Naive thymus-derived CD4-positive, alpha-beta T cell (primary cell): ENCODE measurements at regions of chr1 and their contacts with region 1.

Region 1: DNA sequence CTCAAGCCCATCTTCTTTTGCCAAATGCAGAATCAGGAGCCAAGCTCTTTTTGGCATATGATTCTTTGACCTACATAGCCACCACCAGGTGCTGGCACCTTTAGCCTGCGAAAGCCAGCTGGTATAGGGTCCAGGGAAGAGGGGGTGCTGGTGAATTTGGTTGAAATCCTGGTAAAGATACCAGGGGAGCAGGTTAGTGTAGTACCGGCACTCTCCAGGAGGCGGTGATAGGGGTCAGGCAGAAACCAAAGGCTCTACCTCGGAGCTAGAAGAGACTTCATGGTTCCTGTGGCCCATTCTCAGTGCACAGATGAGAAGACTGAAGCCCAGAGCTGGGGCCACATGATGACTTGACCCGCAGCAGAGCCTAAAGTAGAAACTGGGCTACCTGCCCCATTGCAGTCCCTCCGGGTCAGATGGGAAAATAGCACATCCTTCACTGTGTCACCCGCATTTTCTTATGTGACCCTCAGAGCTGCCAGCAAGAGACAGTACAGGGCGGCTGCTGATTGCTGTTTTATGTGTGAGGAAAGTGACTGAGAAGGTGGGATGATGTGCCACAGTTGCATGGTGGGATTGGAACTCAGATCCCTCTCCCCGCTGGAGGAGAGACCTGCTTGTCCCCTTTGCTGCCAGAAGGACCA is 36.0 kb upstream of the IL19 start:
- DNase-seq: peak; percentile 63 to 87 (median 76)
- ATAC-seq: peak; percentile 80
- H3K4me3 ChIP-seq: no peak overlapping the region
- H3K4me3 Mint-ChIP-seq: peak overlapping the region in 4 of 10 donors; percentile 7 to 54 (median 26)
- H3K27ac ChIP-seq: no peak overlapping the region
- H3K27ac Mint-ChIP-seq: peak overlapping the region; percentile 53 to 95 (median 87)
- H3K4me1 ChIP-seq: peaks cover 49 to 50% of the 10 kb centered on the region in 2 donors
- H3K4me1 Mint-ChIP-seq: peaks cover 40 to 60% (median 56%) of the 10 kb centered on the region in 7 donors
- H3K27me3 ChIP-seq: no peaks in the 10 kb centered on the region
- H3K27me3 Mint-ChIP-seq: no peaks in the 10 kb centered on the region

Region 2: GRCh38 chr1:206684478-206685333 is 49.9 kb before region 1 on chr1 and contains the start of gene MAPKAPK2:
- CTCF ChIA-PET with region 1: no interaction called
- POLR2A ChIA-PET with region 1: no interaction called
- intact Hi-C with region 1: no loop called
- DNase-seq: peak; percentile 52 to 80 (median 71)
- ATAC-seq: peak; percentile 85
- H3K4me3 ChIP-seq: peak within 1 kb of the TSS; percentile 66
- H3K4me3 Mint-ChIP-seq: peak within 1 kb of the TSS; percentile 92 to 100 (median 96)
- H3K27ac ChIP-seq: peak within 1 kb of the TSS; percentile 90
- H3K27ac Mint-ChIP-seq: peak within 1 kb of the TSS; percentile 90 to 98 (median 95)
- H3K4me1 ChIP-seq: peaks cover 12 to 21% of the 10 kb centered on the region in 2 donors
- H3K4me1 Mint-ChIP-seq: peaks cover 23 to 49% (median 38%) of the 10 kb centered on the region in 7 donors
- H3K27me3 ChIP-seq: no peaks in the 10 kb centered on the region
- H3K27me3 Mint-ChIP-seq: peaks cover 0 to 17% (median 0%) of the 10 kb centered on the region in 5 donors
- total RNA-seq, gene MAPKAPK2: 49.6 to 123 (median 80.5) TPM

Region 3: DNA sequence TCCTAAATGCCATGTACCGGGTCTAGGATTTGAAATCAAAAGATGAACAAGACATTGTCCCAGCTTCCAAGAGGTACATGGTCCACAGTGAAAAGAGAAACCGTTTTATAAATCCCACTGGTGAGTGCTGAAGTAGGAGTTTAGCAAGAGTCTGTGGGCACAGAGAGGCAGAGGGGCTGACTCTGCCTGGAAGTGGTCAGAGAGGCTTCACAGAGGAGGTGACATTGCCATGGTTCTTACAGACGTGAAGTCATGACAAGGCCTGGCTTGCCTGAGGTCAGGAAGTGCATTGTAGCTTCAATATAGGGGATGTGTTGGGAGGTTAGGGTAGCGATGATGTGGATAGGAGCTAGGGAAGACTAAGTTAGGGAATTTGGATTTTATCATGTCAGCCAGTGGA is 21.6 kb before region 1 on chr1:
- CTCF ChIA-PET with region 1: no interaction called
- POLR2A ChIA-PET with region 1: no interaction called
- intact Hi-C with region 1: no loop called
- DNase-seq: no peak
- ATAC-seq: peak; percentile 56
- H3K4me3 ChIP-seq: no peak overlapping the region
- H3K4me3 Mint-ChIP-seq: peak overlapping the region in 4 of 10 donors; percentile 4 to 63 (median 32)
- H3K27ac ChIP-seq: no peak overlapping the region
- H3K27ac Mint-ChIP-seq: peak overlapping the region in 6 of 9 donors; percentile 21 to 79 (median 66)
- H3K4me1 ChIP-seq: peaks cover 38 to 56% of the 10 kb centered on the region in 2 donors
- H3K4me1 Mint-ChIP-seq: peaks cover 83 to 93% (median 90%) of the 10 kb centered on the region in 7 donors
- H3K27me3 ChIP-seq: no peaks in the 10 kb centered on the region
- H3K27me3 Mint-ChIP-seq: no peaks in the 10 kb centered on the region

Region 4: GRCh38 chr1:206761159-206761768 is 26.6 kb after region 1 on chr1:
- CTCF ChIA-PET with region 1: interaction called, 40 read pairs
- POLR2A ChIA-PET with region 1: interaction called, 15 read pairs
- intact Hi-C with region 1: loop called (anchors 1 kb)
- DNase-seq: no peak
- ATAC-seq: no peak
- H3K4me3 ChIP-seq: no peak overlapping the region
- H3K4me3 Mint-ChIP-seq: peak overlapping the region in 1 of 10 donors; percentile 30
- H3K27ac ChIP-seq: no peak overlapping the region
- H3K27ac Mint-ChIP-seq: peak overlapping the region in 2 of 9 donors; percentile 29 to 47
- H3K4me1 ChIP-seq: peaks cover 45 to 52% of the 10 kb centered on the region in 2 donors
- H3K4me1 Mint-ChIP-seq: peaks cover 19 to 50% (median 42%) of the 10 kb centered on the region in 7 donors
- H3K27me3 ChIP-seq: no peaks in the 10 kb centered on the region
- H3K27me3 Mint-ChIP-seq: peaks cover 0 to 42% (median 0%) of the 10 kb centered on the region in 5 donors

Region 5: DNA sequence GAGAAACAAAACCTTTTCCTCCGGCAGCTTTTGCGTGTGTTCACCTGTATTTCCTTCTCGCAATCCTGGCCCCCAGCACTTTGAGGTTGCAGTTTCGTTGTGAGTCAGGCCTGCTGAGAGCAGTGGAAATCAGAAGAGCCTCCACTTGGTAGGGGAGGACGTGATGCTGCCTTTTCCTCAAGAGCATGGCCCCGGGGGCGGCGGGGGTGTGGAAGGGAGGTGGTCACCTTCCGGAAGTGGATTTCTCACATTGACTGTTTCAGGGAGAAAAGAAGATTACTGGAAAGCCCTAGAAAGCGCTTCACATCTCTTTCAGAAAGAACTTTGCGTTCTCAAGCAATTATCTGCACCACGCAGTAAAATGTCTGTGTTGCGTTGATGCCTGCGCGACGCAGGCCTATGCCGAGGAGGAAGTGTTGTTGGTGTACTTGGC is 49.9 kb after region 1 on chr1:
- CTCF ChIA-PET with region 1: interaction called, 6 read pairs
- POLR2A ChIA-PET with region 1: interaction called, 3 read pairs
- intact Hi-C with region 1: loop called in 1 of 2 experiments (anchors 1 kb)
- DNase-seq: peak in 8 of 9 donors; percentile 34 to 90 (median 62)
- ATAC-seq: peak; percentile 87
- H3K4me3 ChIP-seq: no peak overlapping the region
- H3K4me3 Mint-ChIP-seq: peak overlapping the region in 9 of 10 donors; percentile 63 to 84 (median 70)
- H3K27ac ChIP-seq: peak overlapping the region; percentile 24
- H3K27ac Mint-ChIP-seq: peak overlapping the region; percentile 77 to 95 (median 90)
- H3K4me1 ChIP-seq: peaks cover 44 to 52% of the 10 kb centered on the region in 2 donors
- H3K4me1 Mint-ChIP-seq: peaks cover 40 to 67% (median 62%) of the 10 kb centered on the region in 7 donors
- H3K27me3 ChIP-seq: no peaks in the 10 kb centered on the region
- H3K27me3 Mint-ChIP-seq: peaks cover 0 to 42% (median 0%) of the 10 kb centered on the region in 5 donors

Region 6: DNA sequence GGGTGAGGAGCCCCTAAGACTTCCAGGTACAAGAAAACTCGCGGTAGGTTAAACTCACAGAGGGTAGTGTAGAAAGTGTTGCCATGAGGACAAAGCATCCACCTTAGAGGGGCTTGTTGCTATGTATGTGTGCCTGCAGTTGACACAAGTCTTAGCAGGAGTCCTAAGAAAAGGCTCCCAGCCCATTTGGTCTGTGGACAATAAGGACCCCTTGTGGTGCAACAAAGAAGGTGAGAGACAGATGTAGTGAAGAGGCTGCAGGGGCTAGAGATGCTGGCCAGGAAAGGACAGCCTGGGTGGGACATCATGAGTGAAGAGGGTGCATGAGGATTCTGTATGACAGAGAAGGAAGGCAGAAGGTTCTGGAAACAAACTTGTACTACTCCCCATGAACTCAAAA is 74.0 kb after region 1 on chr1:
- CTCF ChIA-PET with region 1: interaction called, 329 read pairs
- POLR2A ChIA-PET with region 1: interaction called, 148 read pairs
- intact Hi-C with region 1: loop called (anchors 1 kb)
- DNase-seq: peak in 7 of 9 donors; percentile 47 to 71 (median 58)
- ATAC-seq: peak; percentile 90
- H3K4me3 ChIP-seq: no peak overlapping the region
- H3K4me3 Mint-ChIP-seq: peak overlapping the region in 1 of 10 donors; percentile 8
- H3K27ac ChIP-seq: no peak overlapping the region
- H3K27ac Mint-ChIP-seq: peak overlapping the region in 8 of 9 donors; percentile 17 to 76 (median 51)
- H3K4me1 ChIP-seq: peaks cover 30 to 42% of the 10 kb centered on the region in 2 donors
- H3K4me1 Mint-ChIP-seq: peaks cover 24 to 61% (median 52%) of the 10 kb centered on the region in 7 donors
- H3K27me3 ChIP-seq: no peaks in the 10 kb centered on the region
- H3K27me3 Mint-ChIP-seq: peaks cover 0 to 12% (median 0%) of the 10 kb centered on the region in 5 donors

Region 7: GRCh38 chr1:206935491-206936067 is 201.0 kb after region 1 on chr1:
- CTCF ChIA-PET with region 1: interaction called, 50 read pairs
- POLR2A ChIA-PET with region 1: interaction called, 3 read pairs
- intact Hi-C with region 1: loop called in 1 of 2 experiments (anchors 1 kb)
- DNase-seq: peak in 4 of 9 donors; percentile 28 to 56 (median 48)
- ATAC-seq: peak; percentile 68
- H3K4me3 ChIP-seq: no peak overlapping the region
- H3K4me3 Mint-ChIP-seq: no peak overlapping the region
- H3K27ac ChIP-seq: no peak overlapping the region
- H3K27ac Mint-ChIP-seq: peak overlapping the region in 1 of 9 donors; percentile 12
- H3K4me1 ChIP-seq: peaks cover 6 to 12% of the 10 kb centered on the region in 2 donors
- H3K4me1 Mint-ChIP-seq: peaks cover 2 to 31% (median 29%) of the 10 kb centered on the region in 7 donors
- H3K27me3 ChIP-seq: no peaks in the 10 kb centered on the region
- H3K27me3 Mint-ChIP-seq: peaks cover 0 to 8% (median 0%) of the 10 kb centered on the region in 5 donors